AG04450 (cell line): ENCODE measurements at regions of chr17 and their contacts with region 1.

Region 1: DNA sequence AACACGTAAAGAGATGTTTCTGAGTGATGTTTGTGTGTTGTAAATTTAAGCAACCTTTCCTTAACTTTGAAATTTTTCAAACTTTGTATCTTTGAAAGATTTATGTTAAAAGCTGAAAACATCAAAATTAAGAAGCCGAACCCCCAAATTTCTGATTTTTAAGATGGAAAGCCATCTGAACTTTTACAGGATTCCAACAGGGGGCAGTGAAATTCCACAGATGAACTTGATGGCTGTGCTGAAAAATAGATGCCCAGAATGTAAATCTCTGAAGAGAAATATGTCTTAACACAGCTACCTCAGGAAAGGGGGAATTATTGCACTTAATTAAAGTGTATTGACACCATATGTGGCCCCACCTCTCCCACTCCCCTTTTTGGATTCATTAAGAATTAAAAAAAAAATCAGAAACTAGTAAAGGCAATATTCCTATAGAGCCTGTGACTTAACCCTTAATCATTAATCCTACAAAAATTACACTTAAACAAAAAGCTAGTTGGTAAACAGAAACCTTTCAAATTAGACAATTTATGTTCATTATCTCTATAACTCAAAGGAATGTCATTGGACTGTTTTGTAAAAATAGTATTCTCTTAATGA is 597.9 kb downstream of the KCNJ2 start:
- DNase-seq: peak; percentile 3
- H3K4me3 ChIP-seq: no peak overlapping the region
- H3K27ac ChIP-seq: no peak overlapping the region
- H3K27me3 ChIP-seq: no peaks in the 10 kb centered on the region
- CTCF ChIP-seq: peak; percentile 84

Region 2: DNA sequence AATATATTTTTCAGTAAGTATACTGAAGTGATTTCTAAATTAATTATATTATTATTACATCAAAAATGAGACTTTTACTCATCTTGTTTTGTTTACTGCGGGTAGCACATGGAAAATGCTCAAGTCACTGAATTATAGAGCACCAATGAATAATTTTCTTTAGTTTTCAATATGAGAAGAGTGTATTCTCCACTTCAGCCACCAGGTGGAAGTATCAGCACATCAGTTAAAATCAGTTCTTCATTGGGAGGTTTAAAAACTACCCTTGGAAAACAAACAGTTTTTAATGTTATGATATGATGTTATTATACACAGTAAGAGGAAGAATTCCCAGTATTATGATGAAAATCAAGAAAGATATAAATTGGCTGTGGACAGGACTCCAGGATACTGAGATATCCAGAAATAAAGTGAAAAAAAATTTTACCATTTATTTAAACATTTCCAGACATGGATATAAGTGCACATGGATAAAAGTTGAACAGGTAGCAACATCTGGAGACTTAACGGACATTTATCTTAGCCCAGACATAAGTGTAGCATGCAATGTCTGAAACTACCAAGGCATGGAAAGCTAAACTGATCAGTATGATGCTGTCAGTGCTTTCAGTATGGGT is 130.6 kb before region 1 on chr17:
- CTCF ChIA-PET with region 1: no interaction called
- POLR2A ChIA-PET with region 1: no interaction called
- DNase-seq: peak; percentile 10
- H3K4me3 ChIP-seq: no peak overlapping the region
- H3K27ac ChIP-seq: no peak overlapping the region
- H3K27me3 ChIP-seq: no peaks in the 10 kb centered on the region
- CTCF ChIP-seq: peak; percentile 70

Region 3: DNA sequence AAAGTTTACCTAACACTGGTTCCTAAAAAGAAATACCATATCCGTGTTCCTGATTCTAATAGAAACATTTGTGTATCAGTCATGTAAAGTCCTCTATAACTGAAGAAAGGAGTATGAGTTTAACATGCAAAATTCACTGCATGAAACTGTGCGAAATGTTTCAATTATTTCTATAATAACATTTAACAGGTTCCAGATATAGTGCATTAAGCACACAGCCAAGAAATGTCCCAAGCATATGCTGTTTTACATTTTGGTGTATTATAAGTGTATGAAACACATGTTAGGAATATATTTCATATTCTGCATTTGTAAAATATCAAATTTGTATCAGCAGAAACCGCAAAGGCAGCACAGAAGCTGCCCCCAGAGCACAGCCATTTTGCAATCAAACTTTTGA is 167.0 kb after region 1 on chr17:
- CTCF ChIA-PET with region 1: interaction called, 13 read pairs
- POLR2A ChIA-PET with region 1: no interaction called
- DNase-seq: no peak
- H3K4me3 ChIP-seq: no peak overlapping the region
- H3K27ac ChIP-seq: no peak overlapping the region
- H3K27me3 ChIP-seq: no peaks in the 10 kb centered on the region
- CTCF ChIP-seq: no peak

Region 4: GRCh38 chr17:71115669-71115972 is 348.4 kb after region 1 on chr17:
- CTCF ChIA-PET with region 1: interaction called, 12 read pairs
- POLR2A ChIA-PET with region 1: no interaction called
- DNase-seq: no peak
- H3K4me3 ChIP-seq: no peak overlapping the region
- H3K27ac ChIP-seq: no peak overlapping the region
- H3K27me3 ChIP-seq: no peaks in the 10 kb centered on the region
- CTCF ChIP-seq: no peak

Region 5: GRCh38 chr17:71260366-71260940 is 493.3 kb after region 1 on chr17:
- CTCF ChIA-PET with region 1: interaction called, 10 read pairs
- POLR2A ChIA-PET with region 1: no interaction called
- DNase-seq: no peak
- H3K4me3 ChIP-seq: no peak overlapping the region
- H3K27ac ChIP-seq: no peak overlapping the region
- H3K27me3 ChIP-seq: no peaks in the 10 kb centered on the region
- CTCF ChIP-seq: no peak

Region 6: GRCh38 chr17:71472809-71473789 is 705.9 kb after region 1 on chr17:
- CTCF ChIA-PET with region 1: interaction called, 43 read pairs
- POLR2A ChIA-PET with region 1: no interaction called
- DNase-seq: peak; percentile 42
- H3K4me3 ChIP-seq: no peak overlapping the region
- H3K27ac ChIP-seq: no peak overlapping the region
- H3K27me3 ChIP-seq: no peaks in the 10 kb centered on the region
- CTCF ChIP-seq: peak; percentile 83

Region 7: GRCh38 chr17:72539981-72540897 is 1773.0 kb after region 1 on chr17:
- CTCF ChIA-PET with region 1: interaction called, 32 read pairs
- POLR2A ChIA-PET with region 1: no interaction called
- DNase-seq: no peak
- H3K4me3 ChIP-seq: peak overlapping the region; percentile 52
- H3K27ac ChIP-seq: peak overlapping the region; percentile 47
- H3K27me3 ChIP-seq: no peaks in the 10 kb centered on the region
- CTCF ChIP-seq: peak; percentile 76